ENCODE measurements at regions of chr3 and their contacts with region 1.

Region 1: DNA sequence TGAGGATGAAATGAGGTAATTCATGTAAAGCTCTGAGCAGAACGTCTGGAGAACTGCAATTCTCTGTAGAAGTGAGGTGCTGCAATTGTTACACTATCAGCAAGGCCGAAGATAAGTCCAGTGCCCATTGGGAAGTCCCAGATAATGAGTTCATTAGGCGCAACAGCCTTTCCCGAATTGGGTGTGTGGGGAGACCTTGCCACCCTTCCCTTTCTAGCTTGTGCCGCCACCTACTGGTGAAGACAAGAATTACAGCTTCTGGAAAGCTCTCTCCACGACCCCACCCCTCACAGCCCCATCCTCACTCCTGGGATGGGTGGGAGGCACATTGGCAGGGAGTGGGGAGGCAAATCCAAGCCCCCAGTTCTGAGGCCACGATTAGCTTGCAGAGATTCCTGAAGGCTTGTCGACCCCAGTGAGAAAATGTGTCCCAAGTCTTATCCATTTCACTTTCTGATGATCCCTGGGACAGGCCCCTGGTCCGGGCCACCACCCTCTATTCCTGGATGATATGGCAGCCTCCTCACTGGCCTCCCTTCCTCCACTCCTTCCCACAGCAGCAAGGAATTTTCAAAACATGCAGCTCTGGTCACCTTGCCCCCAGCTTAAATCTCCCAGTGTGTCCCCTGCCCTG is 36.4 kb downstream of the FAM3D start:
- DNase-seq: peak; percentile 65 to 92
- H3K4me3 ChIP-seq: no peak overlapping the region
- CTCF ChIP-seq: peak in 1 of 3 donors; percentile 89
- POLR2A ChIP-seq: no peak

Region 2: GRCh38 chr3:58305882-58306711 is 324.1 kb before region 1 on chr3 and contains the starts of genes HTD2 and RPP14:
- intact Hi-C with region 1: loop called (anchors 5 kb)
- DNase-seq: peak; percentile 98 to 100
- H3K4me3 ChIP-seq: peak within 1 kb of the TSS; percentile 68
- CTCF ChIP-seq: peak in 1 of 3 donors; percentile 90
- POLR2A ChIP-seq: no peak
- total RNA-seq, gene HTD2: 9.5 to 17.7 (median 12.7) TPM
- total RNA-seq, gene RPP14: 8.2 to 16.7 (median 9.5) TPM

Region 3: GRCh38 chr3:58568572-58569286 is 61.5 kb before region 1 on chr3:
- intact Hi-C with region 1: loop called (anchors 5 kb)
- DNase-seq: peak; percentile 81 to 98
- H3K4me3 ChIP-seq: no peak overlapping the region
- CTCF ChIP-seq: no peak
- POLR2A ChIP-seq: no peak

Region 4: GRCh38 chr3:59809710-59810444 is 1179.7 kb after region 1 on chr3:
- intact Hi-C with region 1: no loop called
- DNase-seq: no peak
- H3K4me3 ChIP-seq: no peak overlapping the region
- CTCF ChIP-seq: no peak
- POLR2A ChIP-seq: no peak